ENCODE measurements at regions of chr7 and their contacts with region 1.

Region 1: GRCh38 chr7:155466814-155467733 is 9.1 kb downstream of the EN2 start:
- DNase-seq: peak; percentile 74
- H3K4me3 ChIP-seq: peak overlapping the region in 7 of 8 donors; percentile 0 to 58 (median 16)
- H3K27ac ChIP-seq: no peak overlapping the region
- H3K4me1 ChIP-seq: peaks cover 12 to 38% (median 34%) of the 10 kb centered on the region in 6 donors
- H3K27me3 ChIP-seq: peaks cover 38 to 100% (median 100%) of the 10 kb centered on the region in 7 donors
- CTCF ChIP-seq: no peak
- POLR2A ChIP-seq: no peak

Region 2: DNA sequence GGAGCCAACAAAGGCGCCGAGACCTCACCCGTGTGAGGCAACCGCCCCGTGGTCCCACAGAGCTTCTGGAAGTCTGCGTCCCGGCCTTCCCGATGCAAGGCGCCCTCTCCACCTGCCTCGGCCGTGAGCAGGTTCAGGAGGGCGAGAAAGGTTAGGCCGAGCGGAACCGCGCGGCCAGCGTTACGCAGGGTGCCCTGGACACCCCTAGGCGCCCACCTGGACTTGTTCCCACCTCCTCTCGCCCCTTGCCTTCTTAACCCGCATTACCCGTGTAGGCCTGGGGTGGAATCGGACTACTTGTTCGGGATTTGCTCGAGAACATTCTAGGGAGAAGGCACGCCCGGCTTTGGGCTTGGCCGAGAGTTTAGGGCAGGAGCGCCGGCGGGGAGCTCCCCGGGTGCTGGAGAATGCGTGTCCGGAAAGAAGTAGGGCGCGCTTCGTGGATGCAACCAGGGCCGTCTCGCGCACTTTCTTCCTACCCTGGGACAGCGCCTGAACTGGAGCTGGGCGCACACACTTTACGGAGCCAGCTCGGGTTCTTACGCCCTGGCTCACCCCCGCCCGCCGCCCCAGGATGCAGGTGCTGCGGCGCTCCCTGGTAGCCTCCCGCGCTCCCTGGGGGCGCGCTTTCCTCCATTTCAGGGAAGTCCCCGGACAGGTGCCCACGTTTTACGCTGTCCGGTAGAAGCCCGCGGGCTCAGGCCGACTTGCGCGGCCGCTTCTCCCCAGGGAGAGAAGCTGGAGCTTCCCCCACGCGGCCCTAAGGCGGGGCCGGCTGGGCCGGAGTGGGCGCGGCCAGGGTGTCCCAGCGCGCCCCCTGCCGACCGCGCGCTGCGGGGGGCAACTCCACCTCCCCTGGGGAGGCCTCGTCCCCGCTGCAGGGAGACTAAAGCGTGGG is 94.9 kb before region 1 on chr7:
- intact Hi-C with region 1: loop called (anchors 10 kb)
- DNase-seq: peak; percentile 82
- H3K4me3 ChIP-seq: peak overlapping the region in 6 of 8 donors; percentile 16 to 63 (median 32)
- H3K27ac ChIP-seq: no peak overlapping the region
- H3K4me1 ChIP-seq: peaks cover 35 to 52% (median 45%) of the 10 kb centered on the region in 6 donors
- H3K27me3 ChIP-seq: peaks cover 8 to 88% (median 74%) of the 10 kb centered on the region in 7 donors
- CTCF ChIP-seq: peak in 5 of 11 experiments; percentile 23 to 57 (median 47)
- POLR2A ChIP-seq: no peak

Region 3: DNA sequence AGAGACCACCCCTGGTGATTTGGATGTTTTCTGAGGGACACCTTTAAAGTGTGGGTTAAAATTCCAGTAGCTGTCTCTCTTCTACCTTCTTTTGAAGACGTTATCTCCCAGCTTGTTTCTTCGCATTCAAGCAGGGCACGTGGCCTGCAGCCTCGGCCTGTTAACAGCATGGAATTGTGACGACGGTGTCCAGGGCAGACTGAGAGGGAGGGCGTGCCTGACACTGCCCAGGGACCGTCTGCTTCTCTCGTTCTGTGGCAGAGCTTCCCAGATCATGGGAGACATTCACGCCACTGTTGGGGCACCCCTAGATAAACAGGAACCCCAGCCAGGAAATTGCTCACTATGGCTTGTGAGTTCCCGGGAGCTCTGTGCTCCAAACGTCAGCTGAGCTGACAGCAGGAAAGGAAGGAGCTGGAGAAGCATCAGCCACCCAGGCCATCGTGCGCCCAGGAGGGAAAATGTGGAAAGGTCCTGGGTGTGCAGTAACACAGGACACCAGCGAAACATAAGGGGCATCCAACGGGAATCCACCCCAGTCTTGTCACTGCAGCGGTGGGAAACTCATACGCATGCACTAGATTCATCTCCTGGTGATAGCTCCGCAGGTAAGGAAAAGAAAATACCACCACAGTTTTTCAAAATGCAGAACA is 136.3 kb after region 1 on chr7:
- intact Hi-C with region 1: no loop called
- DNase-seq: peak; percentile 58
- H3K4me3 ChIP-seq: no peak overlapping the region
- H3K27ac ChIP-seq: no peak overlapping the region
- H3K4me1 ChIP-seq: peaks cover 0 to 8% (median 4%) of the 10 kb centered on the region in 6 donors
- H3K27me3 ChIP-seq: peaks cover 0 to 43% (median 0%) of the 10 kb centered on the region in 7 donors
- CTCF ChIP-seq: no peak
- POLR2A ChIP-seq: no peak